HCT116 (cell line): ENCODE measurements at regions of chr6 and their contacts with region 1.

Region 1: DNA sequence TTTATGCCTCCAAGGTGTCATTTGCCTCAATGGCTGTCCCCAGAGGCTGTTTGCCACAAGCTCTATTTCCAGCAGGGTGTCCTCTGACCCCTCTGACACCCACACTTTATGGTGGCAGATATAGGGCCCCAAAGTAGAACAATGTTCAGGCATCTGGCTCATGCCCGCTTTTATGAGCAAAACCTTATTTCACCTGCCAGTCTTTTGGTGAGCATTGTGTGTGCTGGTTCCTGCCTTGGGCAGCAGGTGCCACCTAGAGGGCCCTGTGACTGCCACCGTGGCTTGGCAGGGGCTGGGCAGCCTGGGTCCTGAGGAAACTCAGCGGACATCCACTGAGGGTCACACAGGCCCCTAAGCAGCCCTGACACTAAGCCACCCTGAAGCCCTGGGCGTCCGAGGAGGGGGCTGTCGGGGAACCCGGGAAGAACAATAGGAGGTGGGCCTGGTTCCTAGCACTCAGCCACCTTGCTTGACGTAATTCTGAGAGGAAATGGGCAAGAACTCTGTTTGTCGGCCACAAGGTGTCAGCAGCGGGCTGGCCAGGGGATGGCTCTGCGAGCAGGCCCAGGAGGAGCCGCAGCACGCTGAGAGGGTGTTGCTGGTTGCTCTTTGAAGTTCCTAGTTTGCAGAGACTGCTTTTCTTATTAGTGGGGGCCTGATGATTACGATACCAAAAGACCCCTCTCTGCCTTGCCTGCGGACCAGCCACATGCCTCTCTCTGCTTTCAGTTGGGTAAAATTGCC is 148.9 kb downstream of the SCML4 start:
- DNase-seq: peak; percentile 71
- ATAC-seq: peak; percentile 98
- H3K4me3 ChIP-seq: peak overlapping the region; percentile 8 to 39
- H3K27ac ChIP-seq: no peak overlapping the region
- H3K4me1 ChIP-seq: peaks cover 0 to 10% of the 10 kb centered on the region in 2 experiments; a peak in 1 of 4 replicates
- H3K27me3 ChIP-seq: no peaks in the 10 kb centered on the region
- CTCF ChIP-seq: peak; percentile 78 to 98 (median 90)
- POLR2A ChIP-seq: no peak
- RAD21 ChIP-seq: peak; percentile 89

Region 2: GRCh38 chr6:107132330-107132954 is 542.7 kb before region 1 on chr6:
- CTCF ChIA-PET with region 1: interaction called, 3 read pairs
- POLR2A ChIA-PET with region 1: no interaction called
- RAD21 ChIA-PET with region 1: no interaction called
- intact Hi-C with region 1: loop called (anchors 1 kb)
- DNase-seq: peak; percentile 19
- ATAC-seq: peak; percentile 50; the same call in 1 of the 2 replicates
- H3K4me3 ChIP-seq: no peak overlapping the region
- H3K27ac ChIP-seq: no peak overlapping the region
- H3K4me1 ChIP-seq: peaks cover 5 to 8% of the 10 kb centered on the region in 2 experiments; a peak in 3 of 4 replicates
- H3K27me3 ChIP-seq: no peaks in the 10 kb centered on the region
- CTCF ChIP-seq: peak; percentile 41 to 61 (median 49)
- POLR2A ChIP-seq: no peak
- RAD21 ChIP-seq: peak; percentile 67

Region 3: DNA sequence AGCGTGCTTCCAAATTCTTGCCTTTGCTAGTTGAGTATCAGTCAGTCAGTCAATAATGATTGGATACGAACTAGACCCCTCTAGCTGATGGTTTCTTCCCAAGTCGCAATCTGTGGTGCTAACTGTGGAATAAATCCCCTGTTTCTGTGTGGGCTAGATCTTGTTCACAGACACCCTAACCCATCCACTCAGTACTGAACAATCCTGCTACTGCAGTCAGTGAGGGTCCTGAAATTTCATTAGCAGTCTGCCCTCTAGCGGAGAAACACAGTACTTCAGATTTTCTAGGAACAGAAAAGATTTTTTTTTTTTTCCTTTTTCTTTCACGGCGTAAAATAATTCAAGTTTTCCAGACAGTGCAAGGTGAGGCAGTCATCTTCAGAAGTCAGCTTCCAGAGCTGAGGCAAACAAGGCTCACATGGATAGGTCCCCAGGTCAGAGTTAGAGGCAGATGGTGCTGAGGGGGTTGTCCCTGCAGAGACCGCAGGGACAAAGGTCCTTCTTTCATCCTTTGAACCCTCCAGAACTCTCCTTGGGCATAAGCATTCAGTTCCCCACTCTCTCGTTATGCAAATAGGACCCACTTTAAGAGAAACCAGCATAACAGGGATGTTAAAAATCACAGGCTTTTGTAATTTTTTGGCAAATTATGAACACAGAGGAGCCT is 29.3 kb after region 1 on chr6:
- CTCF ChIA-PET with region 1: no interaction called
- POLR2A ChIA-PET with region 1: no interaction called
- RAD21 ChIA-PET with region 1: no interaction called
- intact Hi-C with region 1: loop called (anchors 1 kb)
- DNase-seq: peak; percentile 18
- ATAC-seq: peak; percentile 82
- H3K4me3 ChIP-seq: no peak overlapping the region
- H3K27ac ChIP-seq: no peak overlapping the region
- H3K4me1 ChIP-seq: 0 out of 4 replicates have a peak, but pooled peaks cover 0 to 2% of the 10 kb centered on the region in 2 experiments
- H3K27me3 ChIP-seq: no peaks in the 10 kb centered on the region
- CTCF ChIP-seq: peak; percentile 67 to 82 (median 70)
- POLR2A ChIP-seq: no peak
- RAD21 ChIP-seq: peak; percentile 62

Region 4: GRCh38 chr6:107866606-107867301 is 191.6 kb after region 1 on chr6:
- CTCF ChIA-PET with region 1: interaction called, 10 read pairs
- POLR2A ChIA-PET with region 1: no interaction called
- RAD21 ChIA-PET with region 1: no interaction called
- intact Hi-C with region 1: no loop called
- DNase-seq: peak; percentile 8
- ATAC-seq: peak; percentile 72
- H3K4me3 ChIP-seq: no peak overlapping the region
- H3K27ac ChIP-seq: no peak overlapping the region
- H3K4me1 ChIP-seq: no peaks in the 10 kb centered on the region
- H3K27me3 ChIP-seq: no peaks in the 10 kb centered on the region
- CTCF ChIP-seq: peak; percentile 21 to 67 (median 63); a peak in 5 of 6 replicates
- POLR2A ChIP-seq: no peak
- RAD21 ChIP-seq: peak; percentile 37; the same call in 1 of the 2 replicates

Region 5: GRCh38 chr6:107941627-107942026 is 266.5 kb after region 1 on chr6:
- CTCF ChIA-PET with region 1: no interaction called
- POLR2A ChIA-PET with region 1: no interaction called
- RAD21 ChIA-PET with region 1: no interaction called
- intact Hi-C with region 1: no loop called
- DNase-seq: no peak
- ATAC-seq: no peak
- H3K4me3 ChIP-seq: no peak overlapping the region
- H3K27ac ChIP-seq: no peak overlapping the region
- H3K4me1 ChIP-seq: no peaks in the 10 kb centered on the region
- H3K27me3 ChIP-seq: no peaks in the 10 kb centered on the region
- CTCF ChIP-seq: no peak
- POLR2A ChIP-seq: no peak
- RAD21 ChIP-seq: no peak

Region 6: GRCh38 chr6:108510461-108511319 is 835.5 kb after region 1 on chr6:
- CTCF ChIA-PET with region 1: no interaction called
- POLR2A ChIA-PET with region 1: no interaction called
- RAD21 ChIA-PET with region 1: no interaction called
- intact Hi-C with region 1: no loop called
- DNase-seq: no peak
- ATAC-seq: no peak
- H3K4me3 ChIP-seq: no peak overlapping the region
- H3K27ac ChIP-seq: no peak overlapping the region
- H3K4me1 ChIP-seq: no peaks in the 10 kb centered on the region
- H3K27me3 ChIP-seq: no peaks in the 10 kb centered on the region
- CTCF ChIP-seq: no peak
- POLR2A ChIP-seq: no peak
- RAD21 ChIP-seq: no peak

Region 7: DNA sequence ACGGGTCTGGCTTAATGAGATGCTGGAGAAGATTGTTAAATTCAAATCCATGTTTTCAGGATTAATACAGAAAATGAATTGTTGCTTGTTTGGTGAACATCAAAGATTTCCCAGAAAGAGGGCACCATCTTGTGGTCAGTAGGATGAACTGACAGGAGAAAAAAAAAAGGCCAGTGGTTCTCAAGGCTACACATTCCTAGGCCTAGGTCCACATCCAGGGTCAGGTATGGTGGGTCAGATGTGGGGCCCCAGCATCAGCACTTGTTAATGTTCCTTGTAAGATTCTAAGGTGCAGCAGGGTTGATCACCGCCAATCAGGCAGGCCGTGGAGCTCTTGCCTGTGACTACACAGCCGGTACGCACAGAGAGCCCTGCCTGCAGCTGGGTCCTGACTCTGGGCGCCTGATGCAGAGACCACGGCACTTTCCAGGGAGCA is 851.6 kb after region 1 on chr6:
- CTCF ChIA-PET with region 1: no interaction called
- POLR2A ChIA-PET with region 1: no interaction called
- RAD21 ChIA-PET with region 1: no interaction called
- intact Hi-C with region 1: loop called (anchors 2 kb)
- DNase-seq: no peak
- ATAC-seq: peak; percentile 74
- H3K4me3 ChIP-seq: no peak overlapping the region
- H3K27ac ChIP-seq: no peak overlapping the region
- H3K4me1 ChIP-seq: no peaks in the 10 kb centered on the region
- H3K27me3 ChIP-seq: no peaks in the 10 kb centered on the region
- CTCF ChIP-seq: peak; percentile 73 to 88 (median 79)
- POLR2A ChIP-seq: no peak
- RAD21 ChIP-seq: peak; percentile 90